H1 (cell line): ENCODE measurements at regions of chr5 and their contacts with region 1.

Region 1: GRCh38 chr5:159444441-159445082 is 114.3 kb upstream of the IL12B start:
- DNase-seq: no peak
- H3K4me3 ChIP-seq: no peak overlapping the region
- H3K27ac ChIP-seq: no peak overlapping the region
- H3K4me1 ChIP-seq: peaks cover 0 to 10% (median 2%) of the 10 kb centered on the region in 4 experiments; a peak in 4 of 7 replicates
- H3K27me3 ChIP-seq: no peaks in the 10 kb centered on the region
- CTCF ChIP-seq: peak in 2 of 3 experiments; percentile 35 to 46; a peak in 2 of 4 replicates
- EP300 ChIP-seq: no peak
- POLR2A ChIP-seq: no peak
- RAD21 ChIP-seq: peak; percentile 83 to 85

Region 2: DNA sequence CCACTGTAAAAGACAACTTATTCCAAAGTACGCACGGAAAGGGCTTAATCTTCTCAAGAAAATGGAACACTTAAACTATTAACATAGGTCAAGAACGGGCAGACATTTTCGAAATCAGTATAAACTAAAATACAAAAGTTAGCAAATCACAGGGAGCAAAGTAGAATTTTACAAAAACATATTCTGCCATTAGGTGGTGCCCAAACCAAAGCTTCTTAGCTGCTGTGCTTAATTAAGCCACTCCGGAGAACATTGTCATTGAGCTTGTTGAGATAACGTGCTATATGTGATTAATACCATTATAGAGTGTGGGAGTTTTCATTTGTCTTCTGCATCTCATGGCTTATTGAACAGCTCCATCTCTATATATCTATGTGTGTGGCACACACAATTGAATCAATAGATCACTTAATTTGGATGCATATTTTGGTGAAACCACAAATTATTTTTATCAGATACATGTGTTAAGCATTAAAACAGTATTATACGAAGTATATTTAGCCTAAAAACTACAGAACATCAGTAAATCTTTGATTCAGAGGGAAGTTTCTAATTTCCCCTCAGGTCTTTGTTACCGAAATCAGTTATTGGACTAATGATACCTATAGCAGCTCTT is 158.0 kb before region 1 on chr5:
- CTCF ChIA-PET with region 1: interaction called, 14 read pairs
- POLR2A ChIA-PET with region 1: no interaction called
- DNase-seq: no peak
- H3K4me3 ChIP-seq: no peak overlapping the region
- H3K27ac ChIP-seq: no peak overlapping the region
- H3K4me1 ChIP-seq: no peaks in the 10 kb centered on the region
- H3K27me3 ChIP-seq: no peaks in the 10 kb centered on the region
- CTCF ChIP-seq: peak in 2 of 3 experiments; percentile 35 to 43; a peak in 2 of 4 replicates
- EP300 ChIP-seq: no peak
- POLR2A ChIP-seq: no peak
- RAD21 ChIP-seq: peak; percentile 80 to 81

Region 3: GRCh38 chr5:159362220-159362619 is 82.3 kb before region 1 on chr5:
- CTCF ChIA-PET with region 1: no interaction called
- POLR2A ChIA-PET with region 1: no interaction called
- DNase-seq: no peak
- H3K4me3 ChIP-seq: no peak overlapping the region
- H3K27ac ChIP-seq: no peak overlapping the region
- H3K4me1 ChIP-seq: no peaks in the 10 kb centered on the region
- H3K27me3 ChIP-seq: no peaks in the 10 kb centered on the region
- CTCF ChIP-seq: no peak
- EP300 ChIP-seq: no peak
- POLR2A ChIP-seq: no peak
- RAD21 ChIP-seq: no peak

Region 4: DNA sequence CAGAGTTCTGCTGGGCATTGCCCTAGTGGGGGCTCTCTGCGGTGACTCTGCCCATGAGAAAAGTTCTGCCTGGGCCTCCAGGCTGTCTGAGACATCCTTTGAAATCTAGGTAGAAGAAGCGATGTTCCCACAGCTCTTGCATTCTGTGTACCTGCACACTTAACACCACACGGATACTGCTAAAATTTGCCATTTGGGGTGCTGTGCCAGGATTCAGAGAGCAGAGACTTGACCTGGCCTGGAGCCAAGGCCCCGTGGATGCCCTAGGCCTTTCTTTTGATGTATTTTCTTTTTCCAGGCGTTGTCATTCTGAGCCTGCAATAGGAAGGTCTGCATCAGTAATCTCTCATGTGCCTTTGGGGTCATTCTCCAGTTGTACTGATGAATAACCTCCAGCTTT is 25.0 kb before region 1 on chr5:
- CTCF ChIA-PET with region 1: interaction called, 30 read pairs
- POLR2A ChIA-PET with region 1: no interaction called
- DNase-seq: no peak
- H3K4me3 ChIP-seq: no peak overlapping the region
- H3K27ac ChIP-seq: no peak overlapping the region
- H3K4me1 ChIP-seq: no peaks in the 10 kb centered on the region
- H3K27me3 ChIP-seq: peaks cover 0 to 1% (median 0%) of the 10 kb centered on the region in 4 experiments; a peak in 1 of 7 replicates
- CTCF ChIP-seq: peak; percentile 39 to 48 (median 43)
- EP300 ChIP-seq: no peak
- POLR2A ChIP-seq: no peak
- RAD21 ChIP-seq: peak; percentile 14 to 36; a peak in 3 of 4 replicates

Region 5: DNA sequence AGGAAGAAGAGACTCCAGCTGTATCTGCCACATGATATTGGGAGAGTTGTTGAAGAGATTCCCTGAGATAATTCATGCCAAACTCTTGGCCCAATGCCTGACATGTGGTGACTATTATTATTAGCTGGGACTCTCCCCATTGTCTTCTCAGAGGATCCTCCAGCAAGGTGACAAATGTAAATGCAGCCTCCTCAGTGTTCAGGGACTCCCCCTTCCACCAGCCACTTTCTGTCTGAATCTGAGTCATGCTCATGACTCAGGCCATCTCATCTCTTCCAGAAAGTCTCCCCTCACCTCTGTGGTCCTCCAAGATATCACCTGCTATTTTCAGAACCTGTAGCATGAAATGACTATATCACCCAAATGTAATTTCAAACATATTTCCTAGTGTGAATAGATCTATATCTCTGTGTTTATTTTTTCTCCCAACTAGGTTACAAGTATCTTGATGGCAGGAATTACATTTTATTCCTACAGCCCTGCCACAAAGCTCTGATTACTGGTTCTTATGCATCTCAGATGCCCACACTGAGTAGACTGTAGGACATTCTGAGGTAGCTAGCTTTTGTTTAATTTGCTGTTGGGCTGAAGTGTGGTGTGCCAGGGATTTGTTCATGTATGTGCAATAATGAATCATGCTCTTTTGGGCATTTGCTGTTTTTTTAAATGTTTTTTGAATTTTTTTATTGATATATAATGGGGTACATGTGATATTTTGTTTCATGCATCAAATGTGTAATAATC is 12.3 kb after region 1 on chr5:
- CTCF ChIA-PET with region 1: interaction called, 74 read pairs
- POLR2A ChIA-PET with region 1: no interaction called
- DNase-seq: no peak
- H3K4me3 ChIP-seq: no peak overlapping the region
- H3K27ac ChIP-seq: no peak overlapping the region
- H3K4me1 ChIP-seq: no peaks in the 10 kb centered on the region
- H3K27me3 ChIP-seq: no peaks in the 10 kb centered on the region
- CTCF ChIP-seq: no peak
- EP300 ChIP-seq: no peak
- POLR2A ChIP-seq: no peak
- RAD21 ChIP-seq: no peak

Region 6: GRCh38 chr5:159915904-159916840 is 471.6 kb after region 1 on chr5 and contains the start of gene ADRA1B:
- CTCF ChIA-PET with region 1: interaction called, 49 read pairs
- POLR2A ChIA-PET with region 1: no interaction called
- DNase-seq: peak; percentile 38 to 81
- H3K4me3 ChIP-seq: peak within 1 kb of the TSS; percentile 38 to 73 (median 58)
- H3K27ac ChIP-seq: no peak within 1 kb of the TSS
- H3K4me1 ChIP-seq: no peaks in the 10 kb centered on the region; a peak in 2 of 7 replicates
- H3K27me3 ChIP-seq: peaks cover 6 to 34% (median 25%) of the 10 kb centered on the region in 4 experiments
- CTCF ChIP-seq: peak; percentile 57 to 70 (median 67)
- EP300 ChIP-seq: no peak
- POLR2A ChIP-seq: no peak
- RAD21 ChIP-seq: peak; percentile 80 to 87
- total RNA-seq, gene ADRA1B: not detected in 2 replicates

Region 7: DNA sequence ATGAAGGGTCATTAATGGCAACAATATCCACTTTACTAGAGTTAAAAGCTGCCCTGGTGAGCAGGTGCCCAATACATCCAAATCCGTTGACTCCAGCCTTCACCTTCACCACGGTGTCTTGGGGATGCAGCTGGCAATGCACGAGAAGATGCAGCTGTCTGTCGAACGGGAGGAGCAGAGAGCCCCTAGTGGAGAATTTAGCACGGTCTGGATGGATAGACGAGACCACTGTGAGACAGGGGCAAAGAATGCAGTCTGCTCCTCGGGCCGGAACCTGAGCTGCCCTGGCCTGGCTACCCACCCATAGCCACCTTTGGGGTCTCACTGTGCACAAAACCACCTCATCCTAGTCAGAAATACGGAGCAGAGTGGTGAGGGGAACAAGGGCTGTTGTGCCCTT is 506.8 kb after region 1 on chr5:
- CTCF ChIA-PET with region 1: interaction called, 12 read pairs
- POLR2A ChIA-PET with region 1: no interaction called
- DNase-seq: peak in 1 of 2 experiments; percentile 57
- H3K4me3 ChIP-seq: no peak overlapping the region
- H3K27ac ChIP-seq: no peak overlapping the region
- H3K4me1 ChIP-seq: no peaks in the 10 kb centered on the region
- H3K27me3 ChIP-seq: no peaks in the 10 kb centered on the region
- CTCF ChIP-seq: peak; percentile 59 to 78 (median 65)
- EP300 ChIP-seq: no peak
- POLR2A ChIP-seq: no peak
- RAD21 ChIP-seq: peak; percentile 57 to 70

Region 8: GRCh38 chr5:159975462-159976019 is 531.0 kb after region 1 on chr5:
- CTCF ChIA-PET with region 1: interaction called, 11 read pairs
- POLR2A ChIA-PET with region 1: no interaction called
- DNase-seq: no peak
- H3K4me3 ChIP-seq: no peak overlapping the region
- H3K27ac ChIP-seq: no peak overlapping the region
- H3K4me1 ChIP-seq: peaks cover 0 to 4% (median 2%) of the 10 kb centered on the region in 4 experiments; a peak in 2 of 7 replicates
- H3K27me3 ChIP-seq: peaks cover 23 to 38% (median 35%) of the 10 kb centered on the region in 4 experiments
- CTCF ChIP-seq: no peak
- EP300 ChIP-seq: no peak
- POLR2A ChIP-seq: no peak
- RAD21 ChIP-seq: peak in 1 of 2 experiments; percentile 30; a peak in 2 of 4 replicates